Gastrocnemius medialis (tissue), 4 donors: ENCODE measurements at regions of chr14 and their contacts with region 1.

Region 1: DNA sequence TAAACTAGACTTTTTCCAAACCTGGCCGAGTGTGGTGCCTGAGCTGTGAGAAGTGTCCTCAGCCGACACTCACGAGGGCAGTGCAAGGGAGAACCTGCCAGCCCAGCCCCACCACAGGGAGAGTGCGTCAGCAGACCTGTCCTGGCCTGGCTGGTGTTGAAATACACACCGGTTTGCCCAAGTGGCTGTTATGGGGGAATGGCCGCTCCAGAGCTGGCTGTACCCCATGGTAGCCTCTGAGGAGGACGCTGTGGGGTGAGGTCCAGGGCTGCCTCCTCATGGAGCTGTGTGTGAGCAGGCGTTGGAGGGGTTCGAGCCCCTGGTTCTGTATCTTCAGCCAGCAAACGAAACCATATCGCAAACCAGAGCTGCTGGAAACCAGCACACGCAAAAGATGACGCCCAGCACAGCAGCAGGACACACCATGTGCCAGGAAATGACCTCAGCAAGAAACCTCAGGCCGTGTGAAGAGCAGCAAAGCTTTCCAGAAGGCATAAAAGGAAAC is 9.4 kb downstream of the ANKRD9 start:
- DNase-seq: peak; percentile 95 to 97
- ATAC-seq: peak; percentile 71 to 82
- H3K4me3 ChIP-seq: peak overlapping the region; percentile 25 to 48 (median 34)
- H3K27ac ChIP-seq: peak overlapping the region; percentile 95 to 99 (median 96)
- H3K4me1 ChIP-seq: peaks cover 59 to 69% of the 10 kb centered on the region in 2 donors
- H3K27me3 ChIP-seq: no peaks in the 10 kb centered on the region
- CTCF ChIP-seq: peak in 1 of 5 experiments; percentile 8
- POLR2A ChIP-seq: peak; percentile 25 to 47

Region 2: DNA sequence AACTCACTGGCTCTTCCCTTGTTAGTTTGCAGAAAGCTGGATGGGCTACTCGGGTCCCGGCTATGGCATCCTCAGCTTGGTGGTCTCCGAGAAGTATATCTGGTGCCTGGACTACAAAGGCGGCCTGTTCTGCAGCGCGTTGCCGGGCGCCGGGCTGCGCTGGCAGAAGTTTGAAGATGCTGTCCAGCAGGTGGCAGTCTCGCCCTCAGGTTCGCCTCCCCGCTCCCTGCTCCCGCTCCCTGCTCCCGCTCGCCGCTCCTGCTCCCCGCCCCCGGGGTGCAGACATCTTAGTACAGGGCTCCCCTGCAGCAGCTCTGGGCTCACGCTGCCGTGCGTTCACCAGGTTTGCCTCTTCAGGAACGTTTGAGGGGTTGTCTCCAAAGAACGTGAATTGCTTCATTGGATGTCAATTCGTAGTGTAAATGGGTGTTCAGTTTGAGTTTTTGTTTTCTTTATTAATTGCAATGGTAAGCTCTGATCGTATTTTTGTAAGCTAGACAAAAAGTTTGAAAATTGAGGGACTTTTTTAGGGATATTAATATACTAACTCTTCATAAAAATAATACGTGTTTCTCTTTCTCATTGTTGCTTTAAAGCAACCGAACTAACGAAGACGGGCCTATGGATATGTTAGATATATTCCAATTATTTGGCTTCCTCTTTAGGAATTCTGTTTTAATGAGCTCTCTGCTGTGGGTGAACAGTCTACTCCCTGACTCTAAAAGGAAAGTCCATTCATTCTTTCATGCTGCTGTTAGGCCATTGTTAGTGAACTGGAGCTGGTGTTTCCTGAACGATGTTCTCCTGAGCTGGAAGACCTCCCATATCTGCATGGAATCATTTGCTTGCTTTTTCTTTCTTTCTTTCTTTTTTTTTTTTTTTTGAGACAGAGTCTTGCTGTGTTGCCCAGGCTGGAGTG is 62.0 kb before region 1 on chr14:
- in situ Hi-C with region 1: no loop called
- intact Hi-C with region 1: loop called (anchors 2 kb)
- DNase-seq: peak; percentile 71 to 86
- ATAC-seq: peak; percentile 40 to 51
- H3K4me3 ChIP-seq: peak overlapping the region; percentile 18 to 40 (median 32)
- H3K27ac ChIP-seq: peak overlapping the region; percentile 29 to 62 (median 48)
- H3K4me1 ChIP-seq: peaks cover 23 to 27% of the 10 kb centered on the region in 2 donors
- H3K27me3 ChIP-seq: no peaks in the 10 kb centered on the region
- CTCF ChIP-seq: peak; percentile 76 to 91 (median 83)
- POLR2A ChIP-seq: no peak

Region 3: GRCh38 chr14:102451061-102451350 is 49.2 kb before region 1 on chr14:
- in situ Hi-C with region 1: no loop called
- intact Hi-C with region 1: loop called (anchors 2 kb)
- DNase-seq: peak; percentile 84 to 88
- ATAC-seq: peak; percentile 78 to 83
- H3K4me3 ChIP-seq: no peak overlapping the region
- H3K27ac ChIP-seq: peak overlapping the region; percentile 86 to 96 (median 90)
- H3K4me1 ChIP-seq: peaks cover 17 to 31% of the 10 kb centered on the region in 2 donors
- H3K27me3 ChIP-seq: no peaks in the 10 kb centered on the region
- CTCF ChIP-seq: no peak
- POLR2A ChIP-seq: no peak

Region 4: GRCh38 chr14:102461490-102462338 is 38.5 kb before region 1 on chr14:
- in situ Hi-C with region 1: no loop called
- intact Hi-C with region 1: loop called (anchors 1 kb)
- DNase-seq: peak; percentile 72 to 79
- ATAC-seq: peak; percentile 95 to 97
- H3K4me3 ChIP-seq: no peak overlapping the region
- H3K27ac ChIP-seq: peak overlapping the region; percentile 87 to 96 (median 92)
- H3K4me1 ChIP-seq: peaks cover 27 to 32% of the 10 kb centered on the region in 2 donors
- H3K27me3 ChIP-seq: no peaks in the 10 kb centered on the region
- CTCF ChIP-seq: no peak
- POLR2A ChIP-seq: no peak

Region 5: GRCh38 chr14:102474934-102475333 is 25.3 kb before region 1 on chr14:
- in situ Hi-C with region 1: no loop called
- intact Hi-C with region 1: no loop called
- DNase-seq: peak; percentile 86 to 96
- ATAC-seq: peak; percentile 94 to 96
- H3K4me3 ChIP-seq: no peak overlapping the region
- H3K27ac ChIP-seq: peak overlapping the region; percentile 78 to 87 (median 84)
- H3K4me1 ChIP-seq: peaks cover 28 to 50% of the 10 kb centered on the region in 2 donors
- H3K27me3 ChIP-seq: no peaks in the 10 kb centered on the region
- CTCF ChIP-seq: no peak
- POLR2A ChIP-seq: no peak

Region 6: DNA sequence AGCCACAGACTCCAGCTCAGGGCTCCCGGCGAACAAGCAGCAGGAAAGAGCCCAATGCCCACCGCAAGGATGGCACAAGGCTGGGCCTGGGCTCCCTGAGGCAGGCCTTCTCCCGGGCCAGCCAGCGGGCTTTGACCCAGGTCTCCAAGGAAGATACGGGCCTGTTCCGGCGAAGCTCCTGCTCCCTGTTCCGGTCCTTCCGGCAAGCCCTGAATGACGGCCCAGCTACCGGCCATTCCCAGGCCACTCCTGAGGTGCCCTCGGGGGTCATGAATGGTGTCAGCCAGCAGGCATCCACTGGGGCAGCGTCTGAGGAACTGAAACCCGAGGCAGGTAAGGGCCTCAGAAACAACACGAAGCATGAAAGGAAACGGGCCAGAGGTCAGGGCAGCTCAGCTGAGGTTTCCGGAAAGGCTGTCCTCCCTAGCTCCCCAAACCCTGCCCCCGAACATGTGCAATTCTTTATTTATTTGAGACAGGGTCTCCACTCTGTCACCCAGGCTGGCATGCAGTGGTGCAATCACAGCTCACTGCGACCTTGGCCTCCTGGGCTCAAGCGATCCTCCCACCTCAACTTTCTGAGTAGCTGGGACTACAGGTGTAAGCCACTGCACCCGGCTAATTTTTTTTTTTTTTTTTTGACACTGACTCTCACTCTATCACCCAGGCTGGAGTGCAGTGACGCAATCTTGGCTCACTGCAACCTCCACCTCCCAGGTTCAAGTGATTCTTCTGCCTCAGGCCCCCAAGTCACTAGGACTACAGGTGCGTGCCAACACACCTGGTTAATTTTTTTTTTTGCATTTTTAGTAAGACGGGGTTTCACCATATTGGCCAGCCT is 600.3 kb after region 1 on chr14:
- in situ Hi-C with region 1: no loop called
- intact Hi-C with region 1: no loop called
- DNase-seq: no peak
- ATAC-seq: no peak
- H3K4me3 ChIP-seq: no peak overlapping the region
- H3K27ac ChIP-seq: no peak overlapping the region
- H3K4me1 ChIP-seq: peaks cover 0 to 14% of the 10 kb centered on the region in 2 donors
- H3K27me3 ChIP-seq: peaks cover 31 to 45% (median 40%) of the 10 kb centered on the region in 3 donors
- CTCF ChIP-seq: no peak
- POLR2A ChIP-seq: no peak